Heart right ventricle (tissue), 16 donors: ENCODE measurements at regions of chr17 and their contacts with region 1.

Region 1: GRCh38 chr17:78970834-78971773 is 8.6 kb downstream of the LGALS3BP start:
- DNase-seq: peak; percentile 83 to 87
- ATAC-seq: peak; percentile 23 to 58 (median 46)
- H3K4me3 ChIP-seq: peak overlapping the region in 2 of 10 donors; percentile 6 to 19
- H3K27ac ChIP-seq: peak overlapping the region in 9 of 10 donors; percentile 23 to 68 (median 54)
- H3K4me1 ChIP-seq: peaks cover 3 to 52% (median 32%) of the 10 kb centered on the region in 9 donors
- H3K27me3 ChIP-seq: no peaks in the 10 kb centered on the region
- CTCF ChIP-seq: peak; percentile 82 to 94 (median 90)

Region 2: GRCh38 chr17:78865682-78866390 is 105.3 kb before region 1 on chr17:
- intact Hi-C with region 1: loop called (anchors 1 to 5 kb)
- DNase-seq: peak; percentile 84 to 87
- ATAC-seq: peak; percentile 68 to 88 (median 83)
- H3K4me3 ChIP-seq: peak overlapping the region in 4 of 10 donors; percentile 13 to 42 (median 26)
- H3K27ac ChIP-seq: peak overlapping the region in 7 of 10 donors; percentile 13 to 60 (median 48)
- H3K4me1 ChIP-seq: peaks cover 3 to 39% (median 12%) of the 10 kb centered on the region in 9 donors
- H3K27me3 ChIP-seq: no peaks in the 10 kb centered on the region
- CTCF ChIP-seq: peak; percentile 85 to 97 (median 93)

Region 3: GRCh38 chr17:78933959-78934568 is 37.0 kb before region 1 on chr17:
- intact Hi-C with region 1: loop called in 3 of 10 experiments (anchors 5 kb)
- DNase-seq: peak; percentile 92 to 94
- ATAC-seq: peak; percentile 81 to 92 (median 89)
- H3K4me3 ChIP-seq: peak overlapping the region in 7 of 10 donors; percentile 23 to 46 (median 39)
- H3K27ac ChIP-seq: peak overlapping the region; percentile 69 to 88 (median 84)
- H3K4me1 ChIP-seq: peaks cover 11 to 42% (median 26%) of the 10 kb centered on the region in 9 donors
- H3K27me3 ChIP-seq: no peaks in the 10 kb centered on the region
- CTCF ChIP-seq: no peak